Adrenal gland (tissue), 19 donors: ENCODE measurements at regions of chr20 and their contacts with region 1.

Region 1: DNA sequence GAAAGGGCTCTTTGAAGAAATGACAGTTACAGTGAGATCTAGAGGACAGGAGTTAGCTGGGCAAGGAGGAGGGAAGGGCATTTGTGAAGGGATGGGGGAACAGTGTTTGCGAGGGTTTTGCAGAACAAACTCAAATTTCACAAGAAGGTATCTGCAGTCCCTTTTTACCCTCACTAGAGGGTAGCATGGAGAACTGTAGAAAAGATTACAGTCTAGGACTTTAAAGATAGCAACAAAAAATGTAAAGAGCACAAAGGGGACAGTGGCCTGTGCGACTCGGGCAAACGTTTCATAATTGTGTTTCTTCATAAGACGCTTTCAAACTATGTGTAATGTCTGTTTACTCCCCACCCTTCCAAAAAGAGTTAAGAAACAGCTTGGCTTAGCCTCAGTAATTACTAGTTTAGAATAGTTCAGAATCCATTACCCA is 21.2 kb upstream of the ASXL1 start:
- DNase-seq: no peak
- H3K4me3 ChIP-seq: no peak overlapping the region
- H3K27ac ChIP-seq: no peak overlapping the region
- H3K4me1 ChIP-seq: peaks cover 3 to 9% of the 10 kb centered on the region in 2 donors
- H3K27me3 ChIP-seq: no peaks in the 10 kb centered on the region
- CTCF ChIP-seq: peak; percentile 35 to 78 (median 64)
- POLR2A ChIP-seq: no peak

Region 2: GRCh38 chr20:32387252-32387651 is 50.3 kb after region 1 on chr20:
- intact Hi-C with region 1: no loop called
- DNase-seq: no peak
- H3K4me3 ChIP-seq: no peak overlapping the region
- H3K27ac ChIP-seq: no peak overlapping the region
- H3K4me1 ChIP-seq: peaks cover 8 to 27% of the 10 kb centered on the region in 2 donors
- H3K27me3 ChIP-seq: no peaks in the 10 kb centered on the region
- CTCF ChIP-seq: no peak
- POLR2A ChIP-seq: no peak

Region 3: DNA sequence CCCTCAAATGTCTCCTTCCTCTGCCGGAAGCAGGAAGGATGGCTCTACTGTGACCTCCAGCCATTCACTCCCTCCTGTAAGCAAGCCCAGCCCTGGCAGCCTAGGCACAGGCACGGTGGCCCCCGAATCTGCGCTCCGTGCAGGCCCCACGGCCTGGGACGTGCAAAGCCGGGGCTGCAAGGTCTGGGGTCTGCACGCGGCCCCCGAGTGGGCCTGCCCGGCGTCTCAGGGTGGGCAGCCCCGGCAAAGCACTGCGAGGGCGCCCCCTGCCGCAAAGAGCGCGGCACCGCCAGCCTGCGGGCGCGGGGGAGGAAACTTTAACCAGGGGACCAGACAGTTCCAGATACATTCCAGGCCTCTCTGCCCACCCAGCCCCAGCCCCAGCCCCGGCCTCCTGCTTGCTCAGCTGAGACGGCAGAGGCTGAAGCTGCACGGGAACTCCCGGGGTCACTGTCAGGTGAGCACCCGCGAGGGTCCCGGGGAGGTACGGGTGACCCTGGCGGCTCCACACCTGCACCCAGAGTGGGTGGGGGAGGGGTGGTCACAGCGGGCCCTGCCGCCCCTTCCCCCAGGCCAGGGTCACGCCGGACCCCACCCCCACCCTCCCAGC is 120.0 kb after region 1 on chr20:
- intact Hi-C with region 1: loop called in 1 of 2 experiments (anchors 10 kb)
- DNase-seq: peak in 2 of 7 donors; percentile 49 to 55
- H3K4me3 ChIP-seq: peak overlapping the region in 2 of 4 donors; percentile 42 to 65
- H3K27ac ChIP-seq: peak overlapping the region in 2 of 5 donors; percentile 50 to 58
- H3K4me1 ChIP-seq: peaks cover 7 to 24% of the 10 kb centered on the region in 2 donors
- H3K27me3 ChIP-seq: no peaks in the 10 kb centered on the region
- CTCF ChIP-seq: peak; percentile 51 to 81 (median 71)
- POLR2A ChIP-seq: no peak

Region 4: GRCh38 chr20:32484958-32485769 is 148.2 kb after region 1 on chr20:
- intact Hi-C with region 1: loop called in 1 of 2 experiments (anchors 10 kb)
- DNase-seq: peak; percentile 71 to 94 (median 84)
- H3K4me3 ChIP-seq: peak overlapping the region in 2 of 4 donors; percentile 73 to 96
- H3K27ac ChIP-seq: peak overlapping the region in 4 of 5 donors; percentile 60 to 91 (median 74)
- H3K4me1 ChIP-seq: peaks cover 22 to 43% of the 10 kb centered on the region in 2 donors
- H3K27me3 ChIP-seq: no peaks in the 10 kb centered on the region
- CTCF ChIP-seq: peak; percentile 64 to 84 (median 79)
- POLR2A ChIP-seq: no peak

Region 5: DNA sequence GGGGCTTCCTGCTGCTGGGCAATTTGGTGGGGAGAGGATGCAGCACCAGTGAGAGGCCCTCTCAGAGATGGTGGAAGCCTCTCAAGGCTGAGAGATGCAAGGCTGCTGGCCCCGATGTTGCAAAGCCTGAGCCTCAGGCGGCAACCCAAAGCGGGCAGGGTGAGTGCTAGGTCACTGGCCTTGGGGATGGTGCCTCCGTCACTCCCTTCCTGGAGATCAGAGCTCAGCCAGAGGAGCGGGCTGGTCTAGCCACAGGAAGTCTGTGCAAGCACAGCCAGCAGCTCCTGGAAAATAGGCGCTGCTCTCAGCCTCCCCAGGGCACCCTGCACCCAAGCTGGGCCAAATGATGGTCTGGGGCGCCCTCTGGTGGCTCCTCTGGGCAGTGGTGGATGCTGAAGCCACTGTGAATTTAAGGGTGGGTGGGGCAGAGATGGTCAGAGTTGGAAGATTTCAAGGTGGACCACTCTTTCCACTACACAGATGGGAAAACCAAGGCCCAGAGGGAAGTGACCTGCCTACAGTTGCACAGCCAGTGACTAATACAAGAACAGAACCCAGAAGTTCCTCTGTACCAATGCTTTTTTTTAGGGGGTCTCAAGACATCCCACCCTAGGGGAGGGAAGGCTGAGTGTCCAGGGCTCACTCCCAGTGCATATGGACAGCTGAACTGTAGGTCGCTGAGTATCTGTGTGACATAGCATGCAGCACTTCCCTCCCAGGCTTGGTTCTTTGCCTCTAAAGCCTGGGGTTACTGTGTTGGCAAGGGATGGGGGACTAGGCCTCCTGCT is 316.0 kb after region 1 on chr20:
- intact Hi-C with region 1: loop called in 1 of 2 experiments (anchors 10 kb)
- DNase-seq: peak; percentile 88 to 95 (median 93)
- H3K4me3 ChIP-seq: no peak overlapping the region
- H3K27ac ChIP-seq: peak overlapping the region in 1 of 5 donors; percentile 32
- H3K4me1 ChIP-seq: no peaks in the 10 kb centered on the region
- H3K27me3 ChIP-seq: no peaks in the 10 kb centered on the region
- CTCF ChIP-seq: peak; percentile 95 to 99 (median 98)
- POLR2A ChIP-seq: peak in 1 of 2 donors; percentile 4